Heart left ventricle (tissue), 16 donors: ENCODE measurements at regions of chrX and their contacts with region 1.

Region 1: DNA sequence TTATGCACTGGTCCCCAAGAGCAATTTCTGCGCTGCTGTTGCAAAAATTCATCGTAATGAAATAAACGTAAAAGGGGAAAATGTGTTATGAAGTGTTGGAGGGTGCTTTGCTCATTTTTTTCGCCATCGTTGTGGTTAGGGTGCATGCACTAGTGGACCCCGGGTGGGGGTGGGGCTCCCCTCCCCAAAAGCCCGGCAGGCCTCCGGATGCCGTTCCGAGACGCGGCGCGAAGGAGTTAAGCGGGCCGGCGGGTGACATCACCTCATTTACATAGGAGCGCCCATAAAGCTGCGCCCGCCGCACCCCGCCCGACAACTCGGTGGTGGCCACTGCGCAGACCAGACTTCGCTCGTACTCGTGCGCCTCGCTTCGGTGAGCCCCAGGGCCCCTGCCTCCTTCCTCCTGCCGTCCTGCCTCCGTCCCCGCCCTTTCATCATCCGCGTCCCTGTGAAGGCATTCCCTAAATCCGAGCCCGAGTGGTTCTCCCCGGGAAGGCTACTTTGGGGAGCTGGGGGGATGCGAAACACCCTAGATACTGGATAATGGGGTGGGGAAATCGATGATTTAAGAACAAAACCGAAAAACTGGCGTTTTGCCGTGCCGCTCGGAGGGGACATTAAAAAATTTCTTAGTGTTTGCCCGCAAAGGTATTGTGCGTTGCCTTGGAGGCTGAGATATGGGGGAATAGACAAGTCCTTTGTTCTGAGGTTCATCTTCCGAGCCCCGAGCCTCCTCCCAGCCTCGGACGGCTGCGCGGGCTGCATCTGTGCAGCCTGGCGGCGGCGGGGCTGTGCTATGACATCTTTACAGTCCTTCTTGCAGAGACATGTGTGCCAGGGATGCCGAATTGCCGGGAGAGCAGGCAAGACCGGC is at the start of gene TMSB4X:
- DNase-seq: peak; percentile 84 to 92 (median 87)
- ATAC-seq: peak; percentile 80 to 88 (median 82)
- H3K4me3 ChIP-seq: peak within 1 kb of the TSS; percentile 61 to 99 (median 84)
- H3K27ac ChIP-seq: peak within 1 kb of the TSS; percentile 90 to 99 (median 95)
- H3K4me1 ChIP-seq: peaks cover 0 to 69% (median 9%) of the 10 kb centered on the region in 12 donors
- H3K27me3 ChIP-seq: peaks cover 0 to 19% (median 0%) of the 10 kb centered on the region in 9 donors
- CTCF ChIP-seq: no peak
- POLR2A ChIP-seq: peak; percentile 60 to 98
- total RNA-seq, gene TMSB4X: 689 to 3,543 (median 935) TPM

Region 2: DNA sequence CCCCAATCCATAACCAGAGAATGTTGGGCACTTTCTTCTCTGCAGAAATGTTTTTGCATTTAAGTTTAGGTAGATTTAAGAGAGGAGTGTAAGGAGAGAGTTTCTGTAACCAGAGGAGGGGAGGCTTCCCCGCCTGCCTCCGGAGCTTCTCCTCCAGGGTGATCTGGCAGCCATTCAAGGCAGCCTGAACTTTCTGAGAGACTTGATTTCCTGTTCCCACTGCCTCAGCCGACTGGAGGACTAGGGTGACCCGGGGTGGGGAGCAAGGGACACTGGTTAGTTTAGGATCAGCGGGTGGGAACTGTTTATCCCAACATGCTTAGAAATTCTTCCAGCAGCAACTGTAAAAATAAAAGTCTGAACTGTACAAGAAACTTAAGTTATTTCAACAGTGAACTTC is 54.3 kb after region 1 on chrX:
- intact Hi-C with region 1: loop called in 2 of 10 experiments (anchors 5 to 10 kb)
- DNase-seq: peak; percentile 57 to 79 (median 70)
- ATAC-seq: peak; percentile 62 to 80 (median 72)
- H3K4me3 ChIP-seq: peak overlapping the region in 1 of 12 donors; percentile 7
- H3K27ac ChIP-seq: peak overlapping the region in 11 of 12 donors; percentile 43 to 84 (median 71)
- H3K4me1 ChIP-seq: peaks cover 0 to 32% (median 14%) of the 10 kb centered on the region in 12 donors
- H3K27me3 ChIP-seq: peaks cover 0 to 15% (median 0%) of the 10 kb centered on the region in 9 donors
- CTCF ChIP-seq: no peak
- POLR2A ChIP-seq: no peak

Region 3: DNA sequence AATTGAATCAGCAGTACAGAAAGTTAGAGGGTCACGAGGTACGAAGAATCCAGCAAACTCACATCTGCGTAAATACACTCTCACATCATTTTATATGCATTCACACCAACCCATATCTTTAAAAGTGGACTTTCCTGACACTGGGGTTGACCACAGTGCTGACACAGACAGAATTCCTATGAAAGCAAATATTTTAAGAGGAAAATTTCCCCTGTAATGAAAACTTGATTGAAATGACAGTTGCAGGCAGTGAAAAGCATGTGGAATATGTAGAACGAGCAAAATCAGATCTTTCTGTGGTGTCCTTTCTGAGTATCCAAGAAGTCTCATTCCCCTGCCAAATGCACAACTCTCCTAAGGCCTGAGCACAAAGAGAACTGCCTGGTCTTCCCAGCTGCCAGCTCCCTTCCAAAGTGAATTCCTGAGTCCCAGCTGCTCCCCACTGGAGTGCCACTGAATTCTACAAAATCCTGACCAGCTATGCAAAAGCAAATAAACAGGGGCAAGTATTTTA is 119.9 kb after region 1 on chrX:
- intact Hi-C with region 1: loop called in 7 of 10 experiments (anchors 5 to 10 kb)
- DNase-seq: peak in 1 of 5 donors; percentile 17
- ATAC-seq: peak in 2 of 4 donors; percentile 40 to 45
- H3K4me3 ChIP-seq: no peak overlapping the region
- H3K27ac ChIP-seq: peak overlapping the region in 8 of 12 donors; percentile 18 to 58 (median 38)
- H3K4me1 ChIP-seq: peaks cover 0 to 55% (median 12%) of the 10 kb centered on the region in 12 donors
- H3K27me3 ChIP-seq: peaks cover 0 to 7% (median 0%) of the 10 kb centered on the region in 9 donors
- CTCF ChIP-seq: no peak
- POLR2A ChIP-seq: no peak

Region 4: GRCh38 chrX:13110433-13111324 is 135.6 kb after region 1 on chrX:
- intact Hi-C with region 1: loop called in 3 of 10 experiments (anchors 5 to 10 kb)
- DNase-seq: peak in 3 of 5 donors; percentile 38 to 42 (median 38)
- ATAC-seq: peak; percentile 81 to 93 (median 90)
- H3K4me3 ChIP-seq: no peak overlapping the region
- H3K27ac ChIP-seq: peak overlapping the region; percentile 33 to 86 (median 72)
- H3K4me1 ChIP-seq: peaks cover 0 to 29% (median 6%) of the 10 kb centered on the region in 12 donors
- H3K27me3 ChIP-seq: no peaks in the 10 kb centered on the region
- CTCF ChIP-seq: no peak
- POLR2A ChIP-seq: peak in 1 of 2 donors; percentile 15

Region 5: DNA sequence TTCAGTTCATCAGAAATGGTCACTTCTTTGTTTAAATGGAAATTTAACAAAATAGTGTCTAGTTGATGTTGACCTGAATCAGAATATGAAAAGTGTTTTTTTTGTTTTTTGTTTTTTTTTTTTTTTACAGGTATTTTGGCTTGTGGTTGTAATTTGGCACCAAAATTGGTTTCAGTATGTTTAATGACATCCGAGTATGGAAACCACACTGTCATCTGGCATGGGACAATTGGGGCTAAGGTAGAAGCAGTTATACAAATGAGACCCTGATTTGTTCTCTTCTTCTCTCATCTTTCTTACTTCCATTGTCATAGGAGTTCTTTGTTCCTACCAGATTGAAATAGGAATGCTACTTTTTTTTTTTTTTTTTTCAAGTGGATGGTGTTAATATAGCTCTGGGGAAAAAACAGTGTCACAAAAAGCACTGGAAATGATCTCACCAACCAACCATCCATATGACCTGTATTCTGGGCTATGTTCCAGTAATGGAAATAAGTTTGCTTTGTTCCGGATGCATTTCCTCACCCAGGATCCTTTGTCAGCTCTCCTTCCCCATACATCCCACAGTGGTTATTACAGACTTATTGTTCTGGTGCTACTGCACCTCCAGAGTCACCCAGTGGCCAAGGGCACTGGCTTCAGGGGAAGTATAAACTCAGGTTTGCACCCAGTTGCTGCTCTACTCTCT is 249.0 kb after region 1 on chrX:
- intact Hi-C with region 1: loop called in 4 of 10 experiments (anchors 5 to 10 kb)
- DNase-seq: peak in 2 of 5 donors; percentile 20 to 25
- ATAC-seq: peak; percentile 78 to 90 (median 86)
- H3K4me3 ChIP-seq: no peak overlapping the region
- H3K27ac ChIP-seq: peak overlapping the region in 7 of 12 donors; percentile 2 to 65 (median 42)
- H3K4me1 ChIP-seq: peaks cover 0 to 20% (median 2%) of the 10 kb centered on the region in 12 donors
- H3K27me3 ChIP-seq: peaks cover 0 to 8% (median 0%) of the 10 kb centered on the region in 9 donors
- CTCF ChIP-seq: peak in 2 of 12 donors; percentile 8 to 9
- POLR2A ChIP-seq: no peak

Region 6: GRCh38 chrX:13487731-13488523 is 512.9 kb after region 1 on chrX:
- intact Hi-C with region 1: loop called (anchors 1 to 5 kb)
- DNase-seq: peak in 3 of 5 donors; percentile 23 to 43 (median 30)
- ATAC-seq: peak; percentile 80 to 85 (median 80)
- H3K4me3 ChIP-seq: no peak overlapping the region
- H3K27ac ChIP-seq: peak overlapping the region; percentile 9 to 77 (median 66)
- H3K4me1 ChIP-seq: peaks cover 0 to 22% (median 11%) of the 10 kb centered on the region in 12 donors
- H3K27me3 ChIP-seq: peaks cover 0 to 34% (median 0%) of the 10 kb centered on the region in 9 donors
- CTCF ChIP-seq: peak; percentile 36 to 68 (median 52)
- POLR2A ChIP-seq: no peak